ENCODE measurements at regions of chr9 and their contacts with region 1.

Region 1: DNA sequence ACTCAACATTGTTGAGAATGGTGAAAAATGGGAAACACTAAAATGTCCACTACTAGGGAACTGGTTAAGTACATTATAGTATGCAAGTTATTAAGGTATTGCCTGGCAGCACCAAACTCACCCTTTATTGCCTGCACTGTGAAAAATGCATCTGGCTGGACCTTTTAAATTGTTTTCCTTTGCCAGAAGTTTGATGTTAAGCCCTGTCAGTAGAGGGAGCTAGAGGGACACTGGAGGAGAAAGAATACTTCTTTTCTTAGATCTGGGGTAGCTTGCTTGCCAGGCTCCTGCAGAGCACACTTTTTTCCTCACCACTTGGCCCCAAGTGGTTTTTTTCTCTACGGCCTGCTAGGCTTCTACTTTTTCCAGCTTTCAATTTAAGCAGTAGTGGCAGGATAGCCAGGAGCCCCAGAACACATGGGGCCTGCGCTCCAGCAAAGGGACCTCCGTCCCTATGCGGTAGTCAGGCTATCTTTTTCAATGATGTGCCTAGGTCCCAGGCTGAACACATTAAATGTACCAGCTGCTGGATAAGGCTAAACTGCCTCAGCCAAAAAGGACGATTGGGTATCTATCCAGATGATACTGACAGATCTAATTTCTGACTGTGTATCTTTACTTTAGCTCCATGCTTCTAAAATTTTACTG is 8.0 kb upstream of the HABP4 start:
- DNase-seq: no peak
- H3K4me3 ChIP-seq: no peak overlapping the region
- H3K27ac ChIP-seq: no peak overlapping the region
- H3K27me3 ChIP-seq: no peaks in the 10 kb centered on the region
- CTCF ChIP-seq: peak; percentile 44

Region 2: DNA sequence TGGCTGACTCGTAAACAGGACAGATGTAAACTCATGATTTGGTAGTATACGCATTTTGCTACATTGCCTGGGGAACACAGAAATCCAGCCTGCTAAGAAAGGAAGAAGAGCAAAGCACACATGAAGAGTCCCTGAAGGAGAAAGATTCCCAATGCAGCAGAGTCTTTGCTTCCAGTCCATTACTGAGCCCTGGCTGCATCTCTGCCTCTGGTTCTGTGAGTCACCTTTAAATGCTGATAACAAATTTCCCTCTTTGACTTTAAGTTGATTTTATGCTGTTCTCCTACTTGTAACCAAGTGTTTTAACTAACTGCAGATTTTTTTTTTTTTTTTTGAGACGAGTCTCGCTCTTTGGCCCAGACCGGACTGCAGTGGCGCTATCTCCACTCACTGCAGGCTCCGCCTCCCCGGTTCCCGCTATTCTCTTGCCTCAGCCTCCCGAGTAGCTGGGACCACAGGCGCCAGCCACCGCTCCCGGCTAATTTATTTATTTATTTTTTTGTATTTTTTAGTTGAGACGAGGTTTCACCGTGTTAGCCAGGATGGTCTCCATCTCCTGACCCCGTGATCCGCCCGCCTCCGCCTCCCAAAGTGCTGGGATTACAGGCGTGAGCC is 221.7 kb after region 1 on chr9:
- CTCF ChIA-PET with region 1: interaction called, 10 read pairs
- POLR2A ChIA-PET with region 1: no interaction called
- DNase-seq: no peak
- H3K4me3 ChIP-seq: no peak overlapping the region
- H3K27ac ChIP-seq: no peak overlapping the region
- H3K27me3 ChIP-seq: no peaks in the 10 kb centered on the region
- CTCF ChIP-seq: no peak

Measured in AG04450 (cell line).